ENCODE measurements at regions of chr10 and their contacts with region 1.

Region 1: DNA sequence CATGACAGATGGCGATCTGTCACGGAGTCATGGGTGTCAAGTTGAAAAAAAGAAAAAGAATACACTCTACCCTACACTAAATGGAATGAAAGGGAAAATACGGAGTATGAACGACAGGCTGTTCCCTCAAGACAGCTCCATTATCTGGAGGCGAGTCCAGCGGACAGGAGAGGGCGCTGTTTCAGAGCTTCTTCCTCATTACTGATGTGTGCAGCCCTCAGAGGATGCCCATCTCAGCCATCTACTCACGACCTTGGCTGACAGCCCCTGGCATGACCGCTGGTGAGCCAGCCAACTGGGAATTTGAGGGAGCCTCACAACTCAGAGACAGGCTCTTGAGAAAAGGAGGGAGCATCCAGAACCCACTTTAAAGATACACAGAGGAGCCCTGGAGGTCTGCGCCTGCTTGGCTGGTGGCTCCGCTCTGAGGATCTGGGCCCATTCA is 49.6 kb upstream of the SMNDC1 start:
- DNase-seq: peak; percentile 58
- ATAC-seq: peak; percentile 59
- H3K4me3 ChIP-seq: no peak overlapping the region
- H3K27ac ChIP-seq: peak overlapping the region; percentile 100
- H3K4me1 ChIP-seq: peaks cover 54% of the 10 kb centered on the region
- H3K27me3 ChIP-seq: no peaks in the 10 kb centered on the region
- CTCF ChIP-seq: peak; percentile 80 to 88 (median 87)
- EP300 ChIP-seq: no peak
- POLR2A ChIP-seq: no peak
- RAD21 ChIP-seq: peak; percentile 81

Region 2: DNA sequence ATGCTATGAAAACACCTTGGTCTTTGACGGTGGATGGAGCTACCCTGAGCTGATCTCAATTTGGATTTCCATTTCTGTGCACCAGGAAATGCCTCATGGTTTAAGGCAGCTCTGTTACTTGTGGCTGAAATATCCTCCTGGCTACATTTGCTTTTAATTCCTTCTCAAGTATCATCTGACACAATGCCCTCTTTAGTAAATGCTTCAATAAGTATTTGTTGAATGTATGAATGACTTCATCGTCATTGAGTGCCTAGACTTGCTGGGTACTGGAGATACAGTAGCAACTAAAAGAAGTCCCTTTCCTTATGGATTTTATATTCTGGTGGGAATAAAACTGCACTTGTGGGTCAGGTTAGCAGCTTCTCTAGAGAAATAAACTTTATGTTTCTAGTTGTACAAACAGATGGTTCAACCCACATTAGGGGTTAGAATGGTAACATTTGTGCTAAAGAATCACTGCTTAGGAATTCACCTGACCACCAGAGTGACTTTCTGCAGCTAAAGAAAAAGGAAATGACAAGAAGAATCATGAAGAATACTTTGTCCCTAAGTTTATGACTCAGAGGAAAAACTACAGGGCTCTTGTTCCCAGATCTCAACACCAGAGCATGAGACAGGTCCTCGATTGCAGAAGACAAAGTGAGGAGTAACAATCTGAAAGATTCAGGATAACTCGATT is 27.9 kb before region 1 on chr10:
- CTCF ChIA-PET with region 1: interaction called, 66 read pairs
- POLR2A ChIA-PET with region 1: interaction called, 22 read pairs
- RAD21 ChIA-PET with region 1: interaction called, 122 read pairs
- SMC1A ChIA-PET with region 1: interaction called, 88 read pairs
- in situ Hi-C with region 1: no loop called
- intact Hi-C with region 1: loop called (anchors 1 kb)
- DNase-seq: peak; percentile 51
- ATAC-seq: peak; percentile 49
- H3K4me3 ChIP-seq: no peak overlapping the region
- H3K27ac ChIP-seq: peak overlapping the region; percentile 79
- H3K4me1 ChIP-seq: peaks cover 39% of the 10 kb centered on the region
- H3K27me3 ChIP-seq: no peaks in the 10 kb centered on the region
- CTCF ChIP-seq: no peak
- EP300 ChIP-seq: peak in 1 of 2 experiments; percentile 60; a peak in 1 of 4 replicates
- POLR2A ChIP-seq: no peak
- RAD21 ChIP-seq: no peak

Region 3: DNA sequence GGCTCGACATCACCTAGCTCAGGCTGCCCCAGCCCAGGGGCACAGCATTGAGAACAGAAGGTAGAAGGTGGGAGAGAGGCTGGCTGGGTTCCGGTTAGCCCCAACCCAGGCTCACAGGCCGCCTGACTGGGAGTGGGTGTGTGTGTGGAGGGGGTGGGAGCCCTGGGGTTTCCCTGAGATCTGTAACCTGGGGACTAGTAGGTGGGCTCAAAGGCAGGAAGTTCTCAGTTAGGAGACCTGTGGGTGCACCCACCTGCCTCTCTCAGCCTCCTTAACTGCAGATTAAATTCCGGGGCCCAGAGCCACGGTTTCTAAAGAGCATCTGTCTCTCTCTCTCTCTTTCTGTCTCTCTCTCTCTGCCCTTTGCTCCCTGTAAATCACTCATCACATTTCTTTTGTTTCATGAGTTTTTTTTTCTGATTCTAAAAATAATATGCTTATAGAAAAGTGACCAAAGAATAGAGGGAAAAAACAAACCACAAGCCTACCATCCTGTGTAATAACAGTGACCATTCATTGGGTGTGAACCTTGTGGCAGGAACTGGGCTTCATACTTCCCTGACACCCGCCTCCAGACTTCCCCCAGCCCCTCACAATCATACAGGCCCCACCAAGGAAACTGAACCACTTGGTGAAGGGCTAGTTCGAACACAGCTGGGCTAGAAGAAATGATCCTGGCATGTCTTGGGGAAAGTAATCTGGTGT is 33.8 kb after region 1 on chr10:
- CTCF ChIA-PET with region 1: interaction called, 17 read pairs
- POLR2A ChIA-PET with region 1: interaction called, 5 read pairs
- RAD21 ChIA-PET with region 1: interaction called, 68 read pairs
- SMC1A ChIA-PET with region 1: interaction called, 22 read pairs
- in situ Hi-C with region 1: no loop called
- intact Hi-C with region 1: loop called (anchors 1 kb)
- DNase-seq: peak; percentile 83
- ATAC-seq: peak; percentile 87
- H3K4me3 ChIP-seq: no peak overlapping the region
- H3K27ac ChIP-seq: peak overlapping the region; percentile 75
- H3K4me1 ChIP-seq: peaks cover 26% of the 10 kb centered on the region
- H3K27me3 ChIP-seq: no peaks in the 10 kb centered on the region
- CTCF ChIP-seq: no peak
- EP300 ChIP-seq: peak in 1 of 2 experiments; percentile 96; a peak in 3 of 4 replicates
- POLR2A ChIP-seq: no peak
- RAD21 ChIP-seq: peak; percentile 22; the same call in 1 of the 2 replicates

Region 4: DNA sequence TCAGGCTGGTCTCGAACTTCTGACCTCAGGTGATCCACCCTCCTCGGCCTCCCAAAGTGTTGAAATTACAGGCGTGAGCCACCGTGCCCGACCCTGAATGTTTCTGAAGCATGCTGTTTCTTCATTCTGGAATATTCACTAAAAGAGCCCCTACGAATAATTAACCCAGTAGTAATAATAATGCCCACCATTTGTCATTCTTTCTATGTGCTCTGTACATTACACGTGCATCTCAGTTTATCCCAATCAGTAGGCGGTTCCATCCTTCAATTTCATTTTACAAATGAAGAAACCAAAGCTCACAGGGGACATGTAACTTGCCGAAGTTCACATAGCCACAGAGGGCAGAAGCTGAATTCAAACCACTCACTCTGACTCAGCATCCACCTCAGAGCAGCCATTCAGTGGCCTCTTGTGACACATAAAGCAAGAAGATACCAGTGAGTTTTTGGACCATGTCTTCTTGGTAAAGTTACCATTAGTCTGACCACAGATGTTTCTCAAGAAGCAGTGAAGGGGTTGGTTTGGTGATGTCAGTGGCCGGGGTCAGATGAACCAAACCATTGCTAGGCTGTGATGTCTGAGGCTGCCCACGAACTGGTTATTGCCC is 71.4 kb after region 1 on chr10:
- CTCF ChIA-PET with region 1: interaction called, 6 read pairs
- POLR2A ChIA-PET with region 1: interaction called, 8 read pairs
- RAD21 ChIA-PET with region 1: interaction called, 21 read pairs
- SMC1A ChIA-PET with region 1: interaction called, 283 read pairs
- in situ Hi-C with region 1: no loop called
- intact Hi-C with region 1: loop called (anchors 1 kb)
- DNase-seq: peak; percentile 89
- ATAC-seq: peak; percentile 86
- H3K4me3 ChIP-seq: no peak overlapping the region
- H3K27ac ChIP-seq: peak overlapping the region; percentile 60
- H3K4me1 ChIP-seq: peaks cover 65% of the 10 kb centered on the region
- H3K27me3 ChIP-seq: no peaks in the 10 kb centered on the region
- CTCF ChIP-seq: no peak
- EP300 ChIP-seq: peak; percentile 56 to 63; a peak in 1 of 4 replicates
- POLR2A ChIP-seq: no peak
- RAD21 ChIP-seq: peak; percentile 34; the same call in 1 of the 2 replicates

Region 5: DNA sequence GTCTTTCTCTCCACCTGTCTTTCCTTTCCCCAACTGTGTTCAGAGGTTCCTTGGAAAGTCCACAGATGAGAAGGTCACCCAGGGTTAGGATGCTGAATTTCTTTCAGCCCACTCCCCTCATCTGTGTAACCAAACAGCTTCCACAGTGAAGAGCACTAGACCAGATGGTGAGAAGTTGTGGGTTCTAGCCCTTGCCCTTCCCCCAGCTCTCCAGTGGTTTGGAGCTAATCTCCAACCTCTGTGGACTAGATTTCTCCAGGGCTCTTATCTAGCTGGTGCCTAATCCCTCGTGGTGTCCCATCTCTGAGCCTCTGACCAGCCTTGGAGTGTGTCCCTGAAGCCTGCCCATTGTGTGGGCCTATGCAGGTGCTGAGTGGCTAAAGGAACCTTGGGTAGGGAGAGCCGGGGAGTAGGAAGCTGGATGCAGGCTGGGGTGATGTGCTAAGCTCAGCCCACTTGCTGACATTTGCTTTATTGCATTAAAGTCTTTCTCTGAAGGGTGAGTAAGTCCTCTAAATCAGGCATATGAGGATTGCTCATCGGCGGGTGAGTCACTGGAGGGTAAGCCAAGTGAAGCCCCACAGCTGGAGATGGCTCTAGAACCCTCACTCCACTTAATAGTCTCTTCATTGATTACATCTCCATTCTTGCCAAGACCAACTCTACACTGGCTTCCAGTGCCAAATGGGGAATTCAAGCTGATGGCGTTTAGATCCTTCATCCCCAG is 158.3 kb after region 1 on chr10:
- CTCF ChIA-PET with region 1: interaction called, 251 read pairs
- POLR2A ChIA-PET with region 1: no interaction called
- RAD21 ChIA-PET with region 1: interaction called, 7 read pairs
- SMC1A ChIA-PET with region 1: interaction called, 9 read pairs
- in situ Hi-C with region 1: no loop called
- intact Hi-C with region 1: no loop called
- DNase-seq: no peak
- ATAC-seq: peak; percentile 21
- H3K4me3 ChIP-seq: no peak overlapping the region
- H3K27ac ChIP-seq: no peak overlapping the region
- H3K4me1 ChIP-seq: no peaks in the 10 kb centered on the region
- H3K27me3 ChIP-seq: no peaks in the 10 kb centered on the region
- CTCF ChIP-seq: no peak
- EP300 ChIP-seq: no peak
- POLR2A ChIP-seq: peak; percentile 61
- RAD21 ChIP-seq: no peak